ENCODE measurements at regions of chr1 and their contacts with region 1.

Region 1: GRCh38 chr1:1001461-1002204 is 1.7 kb upstream of the HES4 start:
- DNase-seq: peak; percentile 73
- H3K4me3 Mint-ChIP-seq: no peak overlapping the region
- H3K27ac Mint-ChIP-seq: no peak overlapping the region
- H3K4me1 Mint-ChIP-seq: peaks cover 17% of the 10 kb centered on the region
- H3K27me3 Mint-ChIP-seq: peaks cover 97% of the 10 kb centered on the region

Region 2: GRCh38 chr1:890661-891060 is 111.0 kb before region 1 on chr1:
- CTCF ChIA-PET with region 1: no interaction called
- DNase-seq: no peak
- H3K4me3 Mint-ChIP-seq: no peak overlapping the region
- H3K27ac Mint-ChIP-seq: no peak overlapping the region
- H3K4me1 Mint-ChIP-seq: no peaks in the 10 kb centered on the region
- H3K27me3 Mint-ChIP-seq: peaks cover 70% of the 10 kb centered on the region

Region 3: DNA sequence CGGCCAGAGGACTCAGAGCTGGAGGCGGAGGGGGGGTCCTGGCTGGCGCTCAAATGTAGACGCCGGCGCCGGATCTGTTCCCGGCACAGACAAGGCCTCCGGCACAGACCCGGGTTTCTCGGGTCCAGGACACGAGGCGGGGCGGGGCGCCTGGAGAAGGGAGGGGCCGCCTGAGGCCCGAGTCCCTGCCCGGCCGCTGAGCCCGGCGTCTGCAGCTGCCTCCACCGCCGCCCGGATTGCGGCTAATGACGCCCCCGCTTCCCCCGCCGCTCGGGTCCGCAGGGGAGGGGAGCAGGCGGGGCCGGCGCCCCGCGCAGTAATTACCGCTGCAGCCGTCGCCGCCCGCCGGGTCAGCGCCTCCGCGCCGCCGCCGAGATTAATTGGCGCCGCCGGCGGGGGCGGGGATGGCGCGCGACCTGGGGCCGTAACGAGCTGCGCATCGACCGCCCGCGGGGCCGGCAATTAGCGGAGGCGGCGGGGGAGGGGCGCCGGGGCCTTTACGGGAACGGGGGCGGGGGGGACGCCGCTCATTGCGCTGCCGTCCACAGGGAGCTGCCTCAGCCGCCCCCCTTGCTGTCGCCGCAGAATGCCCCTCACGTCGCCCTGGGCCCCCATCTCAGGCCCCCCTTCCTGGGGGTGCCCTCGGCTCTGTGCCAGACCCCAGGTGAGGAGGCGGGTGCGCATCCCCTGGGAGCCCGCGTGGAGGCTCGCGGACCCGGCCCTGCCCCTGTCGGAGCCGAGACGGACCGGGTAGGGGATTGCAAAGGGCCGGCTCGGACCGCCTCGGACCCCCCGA is 59.8 kb before region 1 on chr1:
- CTCF ChIA-PET with region 1: no interaction called
- DNase-seq: peak; percentile 39
- H3K4me3 Mint-ChIP-seq: no peak overlapping the region
- H3K27ac Mint-ChIP-seq: no peak overlapping the region
- H3K4me1 Mint-ChIP-seq: peaks cover 7% of the 10 kb centered on the region
- H3K27me3 Mint-ChIP-seq: peaks cover 84% of the 10 kb centered on the region

Region 4: DNA sequence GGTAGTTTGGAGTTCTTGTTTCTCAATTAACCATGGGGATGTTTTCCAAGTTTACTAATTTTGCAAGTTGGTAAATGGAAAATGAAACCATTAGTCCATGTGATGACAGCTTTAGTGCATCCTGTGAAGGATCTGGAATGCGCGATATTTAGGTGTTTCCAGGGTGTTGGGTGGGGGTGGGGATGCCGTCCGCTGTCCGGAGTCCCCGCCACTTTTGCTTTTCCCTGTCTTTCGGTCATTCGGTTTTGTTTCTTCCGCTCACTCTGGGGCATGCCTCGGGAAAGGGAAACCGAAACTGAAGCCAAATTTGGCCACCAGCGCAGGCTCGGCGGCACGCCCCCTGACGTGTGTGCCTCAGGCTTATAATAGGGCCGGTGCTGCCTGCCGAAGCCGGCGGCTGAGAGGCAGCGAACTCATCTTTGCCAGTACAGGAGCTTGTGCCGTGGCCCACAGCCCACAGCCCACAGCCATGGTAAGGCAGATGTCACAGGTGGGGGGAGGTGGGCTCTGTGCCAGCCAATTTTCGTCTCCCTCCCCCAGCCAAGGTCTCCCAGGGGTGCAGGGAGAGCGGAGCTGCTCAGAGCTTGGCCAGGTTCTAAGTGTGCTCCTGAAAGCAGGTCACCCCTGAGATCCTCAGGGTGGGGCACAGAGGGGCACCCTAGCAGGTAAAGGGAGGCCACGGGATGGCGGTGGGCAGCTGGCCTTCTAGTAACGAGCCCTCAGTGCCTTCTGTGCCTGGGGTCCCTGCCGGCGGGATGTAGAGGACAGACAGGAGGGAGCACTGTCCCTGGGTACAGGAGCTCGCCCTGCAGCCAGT is 11.7 kb after region 1 on chr1 and contains the start of gene ISG15:
- CTCF ChIA-PET with region 1: interaction called, 12 read pairs
- DNase-seq: peak; percentile 95
- H3K4me3 Mint-ChIP-seq: peak within 1 kb of the TSS; percentile 86
- H3K27ac Mint-ChIP-seq: peak within 1 kb of the TSS; percentile 95
- H3K4me1 Mint-ChIP-seq: peaks cover 42% of the 10 kb centered on the region
- H3K27me3 Mint-ChIP-seq: peaks cover 11% of the 10 kb centered on the region